IMR-90 (cell line): ENCODE measurements at regions of chr20 and their contacts with region 1.

Region 1: GRCh38 chr20:4512891-4513550 is 208.7 kb upstream of the PRND start:
- DNase-seq: peak; percentile 95
- ATAC-seq: peak; percentile 82
- H3K4me3 ChIP-seq: no peak overlapping the region
- H3K27ac ChIP-seq: no peak overlapping the region; the same call in 1 of the 2 replicates
- H3K4me1 ChIP-seq: peaks cover 5% of the 10 kb centered on the region; the same call in 1 of the 2 replicates
- H3K27me3 ChIP-seq: no peaks in the 10 kb centered on the region
- CTCF ChIP-seq: no peak
- POLR2A ChIP-seq: no peak
- RAD21 ChIP-seq: no peak

Region 2: GRCh38 chr20:4202441-4202840 is 310.6 kb before region 1 on chr20:
- CTCF ChIA-PET with region 1: no interaction called
- POLR2A ChIA-PET with region 1: no interaction called
- dilution Hi-C with region 1: no loop called
- in situ Hi-C with region 1: no loop called
- intact Hi-C with region 1: no loop called
- DNase-seq: no peak
- ATAC-seq: no peak
- H3K4me3 ChIP-seq: no peak overlapping the region
- H3K27ac ChIP-seq: no peak overlapping the region
- H3K4me1 ChIP-seq: no peaks in the 10 kb centered on the region
- H3K27me3 ChIP-seq: no peaks in the 10 kb centered on the region
- CTCF ChIP-seq: no peak
- POLR2A ChIP-seq: no peak
- RAD21 ChIP-seq: no peak

Region 3: GRCh38 chr20:4289875-4290274 is 223.1 kb before region 1 on chr20:
- CTCF ChIA-PET with region 1: no interaction called
- POLR2A ChIA-PET with region 1: no interaction called
- dilution Hi-C with region 1: no loop called
- in situ Hi-C with region 1: no loop called
- intact Hi-C with region 1: no loop called
- DNase-seq: no peak
- ATAC-seq: no peak
- H3K4me3 ChIP-seq: no peak overlapping the region
- H3K27ac ChIP-seq: no peak overlapping the region
- H3K4me1 ChIP-seq: no peaks in the 10 kb centered on the region
- H3K27me3 ChIP-seq: 0 out of 2 replicates have a peak, but pooled peaks cover under 1% of the 10 kb centered on the region
- CTCF ChIP-seq: no peak
- POLR2A ChIP-seq: no peak
- RAD21 ChIP-seq: no peak

Region 4: GRCh38 chr20:4470375-4470774 is 42.6 kb before region 1 on chr20:
- CTCF ChIA-PET with region 1: no interaction called
- POLR2A ChIA-PET with region 1: no interaction called
- dilution Hi-C with region 1: no loop called
- in situ Hi-C with region 1: no loop called
- intact Hi-C with region 1: no loop called
- DNase-seq: peak; percentile 87
- ATAC-seq: peak; percentile 81
- H3K4me3 ChIP-seq: no peak overlapping the region
- H3K27ac ChIP-seq: no peak overlapping the region
- H3K4me1 ChIP-seq: peaks cover 17% of the 10 kb centered on the region
- H3K27me3 ChIP-seq: no peaks in the 10 kb centered on the region
- CTCF ChIP-seq: 0 out of 2 replicates have a peak, but pooled peaks have one; percentile 16
- POLR2A ChIP-seq: no peak
- RAD21 ChIP-seq: no peak

Region 5: DNA sequence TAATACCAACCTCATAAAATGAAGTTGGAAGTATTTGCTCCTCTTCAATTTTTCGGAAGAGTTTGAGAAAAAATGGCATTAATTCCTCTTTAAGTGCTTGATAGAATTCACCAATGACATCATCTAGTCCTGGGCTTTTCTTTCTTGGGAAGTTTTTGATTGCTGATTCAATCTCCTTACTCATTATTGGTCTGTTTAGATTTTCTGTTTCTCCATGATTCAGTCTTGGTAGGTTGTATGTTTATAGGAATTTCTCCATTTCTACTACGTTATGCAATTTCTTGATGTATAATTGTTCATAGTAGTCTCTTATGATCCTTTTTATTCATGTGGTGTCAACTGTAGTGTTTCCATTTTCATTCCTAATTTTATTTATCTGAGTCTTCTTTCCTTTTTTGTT is 31.7 kb after region 1 on chr20:
- CTCF ChIA-PET with region 1: no interaction called
- POLR2A ChIA-PET with region 1: no interaction called
- dilution Hi-C with region 1: no loop called
- in situ Hi-C with region 1: no loop called
- intact Hi-C with region 1: loop called (anchors 2 kb)
- DNase-seq: peak; percentile 93
- ATAC-seq: peak; percentile 73
- H3K4me3 ChIP-seq: no peak overlapping the region
- H3K27ac ChIP-seq: no peak overlapping the region
- H3K4me1 ChIP-seq: peaks cover 16% of the 10 kb centered on the region
- H3K27me3 ChIP-seq: no peaks in the 10 kb centered on the region
- CTCF ChIP-seq: no peak
- POLR2A ChIP-seq: no peak
- RAD21 ChIP-seq: no peak